A549 (cell line): ENCODE measurements at regions of chr2 and their contacts with region 1.

Region 1: DNA sequence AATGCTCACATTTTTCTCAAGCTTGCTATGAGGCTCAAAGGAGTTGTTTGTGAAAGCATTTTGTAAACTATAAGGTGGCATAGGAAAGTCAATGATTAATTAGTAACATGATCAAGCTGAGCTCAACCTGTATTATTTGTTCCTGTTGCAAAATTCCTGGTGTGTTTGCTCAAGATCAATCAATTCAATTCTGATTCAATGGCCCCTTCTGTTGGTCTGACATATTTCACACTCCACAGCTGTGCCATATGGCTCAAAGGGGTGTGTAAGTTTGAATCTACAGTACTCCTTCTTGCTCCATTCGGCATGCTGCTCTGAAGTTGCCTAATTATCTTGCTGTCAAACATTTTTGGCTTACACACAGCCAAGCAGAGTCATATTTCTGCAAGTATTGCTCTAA is 341.6 kb upstream of the LRP1B start:
- DNase-seq: no peak
- ATAC-seq: no peak
- H3K4me3 ChIP-seq: no peak overlapping the region
- H3K27ac ChIP-seq: no peak overlapping the region
- H3K4me1 ChIP-seq: no peaks in the 10 kb centered on the region; the same call in 2 of the 3 replicates
- CTCF ChIP-seq: no peak
- EP300 ChIP-seq: no peak
- POLR2A ChIP-seq: no peak
- RAD21 ChIP-seq: no peak

Region 2: DNA sequence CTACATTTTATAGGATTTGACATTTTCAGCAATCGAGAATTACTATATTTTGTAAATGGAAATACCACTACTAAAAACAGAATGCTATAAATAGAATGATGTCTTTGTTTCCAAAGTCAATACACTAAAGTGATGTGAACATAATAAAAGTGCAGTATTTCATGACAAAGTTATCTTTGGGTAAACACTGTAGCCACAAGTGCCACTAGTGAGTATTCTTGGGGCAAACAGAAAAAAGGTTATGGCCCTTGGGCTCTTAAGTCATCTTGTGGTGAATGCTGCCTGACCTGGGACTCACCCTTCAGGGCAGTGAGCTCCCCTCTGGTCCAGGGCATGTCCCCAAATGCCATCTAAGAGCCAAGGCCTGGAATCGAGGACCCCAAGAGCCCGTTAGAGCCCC is 305.9 kb after region 1 on chr2:
- CTCF ChIA-PET with region 1: no interaction called
- POLR2A ChIA-PET with region 1: interaction called, 10 read pairs
- DNase-seq: no peak
- ATAC-seq: no peak
- H3K4me3 ChIP-seq: no peak overlapping the region
- H3K27ac ChIP-seq: 0 out of 6 replicates have a peak overlapping the region, but pooled peaks of 1 of the 2 experiments have one; percentile 0
- H3K4me1 ChIP-seq: no peaks in the 10 kb centered on the region
- CTCF ChIP-seq: no peak
- EP300 ChIP-seq: no peak
- POLR2A ChIP-seq: no peak
- RAD21 ChIP-seq: no peak

Region 3: DNA sequence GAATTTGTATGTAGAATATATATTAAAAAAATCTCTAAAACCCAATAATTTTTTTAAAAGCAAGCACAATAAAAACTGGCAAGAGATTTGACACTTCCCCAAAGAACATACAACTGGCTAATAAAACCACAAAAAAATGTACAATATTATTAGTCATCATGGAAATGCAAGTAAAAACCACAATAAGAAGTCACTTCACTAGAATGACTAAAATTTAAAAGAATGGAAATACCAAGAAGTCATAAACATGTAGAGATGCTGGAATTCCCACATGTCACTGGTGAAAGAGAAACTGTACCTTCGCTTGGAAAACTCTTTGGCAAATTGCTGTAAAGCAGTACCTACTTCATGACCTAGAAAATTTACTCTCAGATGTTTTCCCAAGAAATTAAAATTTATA is 361.6 kb after region 1 on chr2:
- CTCF ChIA-PET with region 1: no interaction called
- POLR2A ChIA-PET with region 1: no interaction called
- DNase-seq: no peak
- ATAC-seq: no peak
- H3K4me3 ChIP-seq: no peak overlapping the region
- H3K27ac ChIP-seq: no peak overlapping the region
- H3K4me1 ChIP-seq: peaks cover 10% of the 10 kb centered on the region; the same call in 2 of the 3 replicates
- CTCF ChIP-seq: no peak
- EP300 ChIP-seq: no peak
- POLR2A ChIP-seq: no peak
- RAD21 ChIP-seq: no peak